Activated T-helper 1 cell treated with anti-CD3 and anti-CD28 coated beads, Interleukin-12 subunit alpha, Interleukin-12 subunit beta, Interleukin-2, Interleukin-4 antibody, amounts not matched to agents 30 ng/mL and 10 ng/mL and 1 ng/mL, durations not matched to agents 14 hours and 24 hours and 36 hours (primary cell): ENCODE measurements at regions of chr2 and their contacts with region 1.

Region 1: DNA sequence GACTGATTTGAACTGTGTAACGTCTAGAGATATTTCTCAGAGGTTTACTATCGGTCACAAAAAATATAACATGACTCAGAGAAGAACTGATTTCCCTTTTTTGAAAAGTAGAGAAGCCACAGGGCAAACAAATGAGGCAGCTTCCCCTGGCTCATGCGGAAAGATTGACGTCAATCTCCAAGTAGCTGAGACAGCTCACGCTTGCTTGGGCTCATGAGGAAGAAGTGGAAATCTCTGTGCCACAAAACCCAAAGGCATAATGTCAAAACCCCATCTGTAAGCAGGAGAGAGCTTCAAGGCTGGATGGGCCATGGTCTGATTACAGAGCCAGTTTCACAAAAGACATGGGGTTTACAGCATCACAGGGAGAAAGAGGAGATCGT is 188.1 kb downstream of the ARL4C start:
- DNase-seq: peak; percentile 79
- H3K4me3 Mint-ChIP-seq: peak overlapping the region; percentile 68
- H3K27ac Mint-ChIP-seq: peak overlapping the region; percentile 99
- H3K4me1 Mint-ChIP-seq: peaks cover 70% of the 10 kb centered on the region
- H3K27me3 Mint-ChIP-seq: no peaks in the 10 kb centered on the region

Region 2: GRCh38 chr2:234142530-234142929 is 166.3 kb before region 1 on chr2:
- intact Hi-C with region 1: no loop called
- DNase-seq: no peak
- H3K4me3 Mint-ChIP-seq: no peak overlapping the region
- H3K27ac Mint-ChIP-seq: no peak overlapping the region
- H3K4me1 Mint-ChIP-seq: peaks cover 33% of the 10 kb centered on the region
- H3K27me3 Mint-ChIP-seq: peaks cover 5% of the 10 kb centered on the region

Region 3: GRCh38 chr2:234231460-234231859 is 77.3 kb before region 1 on chr2:
- intact Hi-C with region 1: no loop called
- DNase-seq: no peak
- H3K4me3 Mint-ChIP-seq: no peak overlapping the region
- H3K27ac Mint-ChIP-seq: no peak overlapping the region
- H3K4me1 Mint-ChIP-seq: no peaks in the 10 kb centered on the region
- H3K27me3 Mint-ChIP-seq: peaks cover 6% of the 10 kb centered on the region

Region 4: DNA sequence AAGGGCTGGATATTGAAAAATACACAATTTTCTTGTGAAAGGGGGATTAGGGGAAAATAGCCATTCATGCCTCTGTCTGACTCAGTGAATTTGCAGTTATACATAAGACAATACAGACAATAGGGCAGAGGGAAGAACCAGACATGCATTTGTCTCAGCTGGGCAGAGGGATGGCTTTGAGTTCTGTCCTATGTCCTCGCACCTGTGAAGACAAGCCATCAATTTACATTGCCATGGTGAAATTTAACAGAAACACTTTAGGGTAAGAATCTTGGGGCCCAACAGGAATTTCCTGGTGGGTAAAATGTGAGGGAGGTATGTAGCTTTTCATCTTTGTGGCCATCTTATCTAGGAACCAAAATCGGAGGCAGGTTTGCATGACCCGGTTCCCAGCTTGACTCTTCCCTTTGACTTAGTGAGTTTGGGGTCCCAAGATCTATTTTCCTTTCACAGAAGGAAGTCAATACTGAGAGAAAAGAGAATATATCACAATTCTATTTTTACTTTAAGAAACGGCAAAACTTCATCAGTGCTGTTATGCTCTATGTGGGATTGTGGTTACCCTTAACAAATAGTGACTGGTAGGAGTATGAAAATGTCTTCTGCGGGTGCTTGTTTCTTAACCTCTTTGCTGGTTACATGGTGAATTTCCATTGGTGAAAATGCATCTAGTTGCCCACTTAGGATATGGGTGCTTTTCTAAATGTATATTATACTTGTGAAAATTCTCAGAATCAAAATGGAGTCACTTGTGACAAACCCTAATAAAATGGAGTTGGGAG is 36.5 kb before region 1 on chr2:
- intact Hi-C with region 1: loop called (anchors 1 kb)
- DNase-seq: no peak
- H3K4me3 Mint-ChIP-seq: peak overlapping the region; percentile 40
- H3K27ac Mint-ChIP-seq: peak overlapping the region; percentile 85
- H3K4me1 Mint-ChIP-seq: peaks cover 80% of the 10 kb centered on the region
- H3K27me3 Mint-ChIP-seq: no peaks in the 10 kb centered on the region

Region 5: GRCh38 chr2:234296991-234297390 is 11.8 kb before region 1 on chr2:
- intact Hi-C with region 1: loop called (anchors 1 kb)
- DNase-seq: no peak
- H3K4me3 Mint-ChIP-seq: no peak overlapping the region
- H3K27ac Mint-ChIP-seq: peak overlapping the region; percentile 62
- H3K4me1 Mint-ChIP-seq: peaks cover 89% of the 10 kb centered on the region
- H3K27me3 Mint-ChIP-seq: no peaks in the 10 kb centered on the region

Region 6: DNA sequence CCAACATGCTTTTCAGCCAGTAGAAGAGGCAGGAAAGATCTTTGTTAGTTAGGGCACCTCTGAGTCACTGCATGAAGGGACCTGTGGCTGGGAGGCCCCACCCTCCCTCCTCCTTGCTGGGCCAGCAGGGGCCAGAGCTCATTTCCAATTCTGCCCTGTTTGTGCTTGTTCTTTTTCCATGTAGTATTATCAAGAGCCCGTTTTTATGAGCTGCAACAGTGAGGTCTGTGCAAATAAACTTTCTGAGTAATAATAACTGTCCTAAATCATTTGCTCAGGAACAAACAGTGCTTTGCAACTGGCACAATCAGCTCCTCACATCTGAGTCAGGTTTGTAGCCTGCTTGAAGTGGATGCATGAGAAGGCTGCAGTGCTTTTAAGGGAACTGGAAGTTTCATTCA is 60.1 kb after region 1 on chr2:
- intact Hi-C with region 1: loop called (anchors 1 kb)
- DNase-seq: peak; percentile 35
- H3K4me3 Mint-ChIP-seq: peak overlapping the region; percentile 54
- H3K27ac Mint-ChIP-seq: peak overlapping the region; percentile 84
- H3K4me1 Mint-ChIP-seq: peaks cover 76% of the 10 kb centered on the region
- H3K27me3 Mint-ChIP-seq: no peaks in the 10 kb centered on the region

Region 7: GRCh38 chr2:234446404-234447076 is 137.7 kb after region 1 on chr2:
- intact Hi-C with region 1: loop called (anchors 1 kb)
- DNase-seq: peak; percentile 87
- H3K4me3 Mint-ChIP-seq: peak overlapping the region; percentile 75
- H3K27ac Mint-ChIP-seq: peak overlapping the region; percentile 99
- H3K4me1 Mint-ChIP-seq: peaks cover 88% of the 10 kb centered on the region
- H3K27me3 Mint-ChIP-seq: no peaks in the 10 kb centered on the region

Region 8: GRCh38 chr2:234488913-234489451 is 180.2 kb after region 1 on chr2:
- intact Hi-C with region 1: loop called (anchors 1 kb)
- DNase-seq: peak; percentile 80
- H3K4me3 Mint-ChIP-seq: peak overlapping the region; percentile 88
- H3K27ac Mint-ChIP-seq: peak overlapping the region; percentile 95
- H3K4me1 Mint-ChIP-seq: peaks cover 92% of the 10 kb centered on the region
- H3K27me3 Mint-ChIP-seq: no peaks in the 10 kb centered on the region